Activated T-helper 1 cell treated with anti-CD3 and anti-CD28 coated beads, Interleukin-12 subunit alpha, Interleukin-12 subunit beta, Interleukin-2, Interleukin-4 antibody, amounts not matched to agents 30 ng/mL and 10 ng/mL and 1 ng/mL, durations not matched to agents 14 hours and 24 hours and 36 hours (primary cell): ENCODE measurements at regions of chr6 and their contacts with region 1.

Region 1: DNA sequence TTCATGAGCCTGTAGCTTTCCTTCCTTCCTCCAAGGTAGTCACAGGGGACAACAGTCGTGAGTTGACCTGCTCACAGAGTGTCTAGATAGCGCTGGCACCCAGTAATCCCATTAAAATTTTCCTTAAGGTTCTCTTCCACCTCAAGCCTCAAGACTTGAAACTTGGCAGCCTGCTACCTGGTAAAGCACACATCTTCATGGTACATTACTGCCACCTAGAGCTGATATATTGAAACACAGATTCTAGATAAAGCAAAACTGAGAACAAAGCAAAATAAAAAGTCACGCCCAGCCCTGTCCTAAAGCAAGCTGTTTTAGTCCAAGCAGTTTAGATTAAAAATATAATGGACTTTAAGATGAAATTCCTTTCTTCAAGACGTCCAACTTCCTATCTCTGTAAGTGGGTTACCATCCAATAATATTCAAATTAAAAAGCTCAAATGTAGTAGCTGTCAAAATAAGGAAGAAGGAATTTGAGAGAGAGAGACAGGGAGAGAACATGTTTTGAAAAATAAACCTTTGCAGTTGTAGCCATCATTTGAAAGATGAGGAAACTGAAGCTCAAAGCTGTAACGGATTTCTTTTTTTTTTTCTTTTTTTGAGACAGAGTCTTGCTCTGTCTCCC is 50.7 kb upstream of the CD83 start:
- DNase-seq: no peak
- H3K4me3 Mint-ChIP-seq: peak overlapping the region; percentile 32
- H3K27ac Mint-ChIP-seq: peak overlapping the region; percentile 21
- H3K4me1 Mint-ChIP-seq: peaks cover 35% of the 10 kb centered on the region
- H3K27me3 Mint-ChIP-seq: peaks cover 11% of the 10 kb centered on the region

Region 2: DNA sequence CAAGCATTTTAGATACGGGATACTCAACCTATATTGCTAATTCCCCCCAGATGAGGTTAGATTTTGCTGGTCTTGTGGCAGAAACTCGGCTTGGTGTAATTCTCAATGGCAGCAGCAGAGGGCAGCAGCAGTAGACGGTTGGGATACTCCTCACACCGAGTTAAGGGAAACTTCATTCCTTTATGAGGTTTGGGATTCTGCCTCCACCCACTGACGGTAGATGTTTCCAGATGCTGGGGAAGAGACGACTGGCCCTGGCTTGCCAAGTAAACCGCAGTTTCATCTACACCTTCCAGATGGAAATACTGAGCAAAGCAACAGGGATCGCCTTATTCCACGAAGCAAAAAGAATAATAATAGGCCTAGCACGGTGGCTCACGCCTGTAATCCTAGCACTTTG is 730.3 kb before region 1 on chr6:
- intact Hi-C with region 1: loop called (anchors 2 kb)
- DNase-seq: peak; percentile 60
- H3K4me3 Mint-ChIP-seq: no peak overlapping the region
- H3K27ac Mint-ChIP-seq: no peak overlapping the region
- H3K4me1 Mint-ChIP-seq: peaks cover 43% of the 10 kb centered on the region
- H3K27me3 Mint-ChIP-seq: peaks cover 9% of the 10 kb centered on the region

Region 3: GRCh38 chr6:13795041-13795750 is 271.7 kb before region 1 on chr6:
- intact Hi-C with region 1: loop called (anchors 1 kb)
- DNase-seq: peak; percentile 75
- H3K4me3 Mint-ChIP-seq: peak overlapping the region; percentile 5
- H3K27ac Mint-ChIP-seq: peak overlapping the region; percentile 40
- H3K4me1 Mint-ChIP-seq: peaks cover 21% of the 10 kb centered on the region
- H3K27me3 Mint-ChIP-seq: no peaks in the 10 kb centered on the region

Region 4: DNA sequence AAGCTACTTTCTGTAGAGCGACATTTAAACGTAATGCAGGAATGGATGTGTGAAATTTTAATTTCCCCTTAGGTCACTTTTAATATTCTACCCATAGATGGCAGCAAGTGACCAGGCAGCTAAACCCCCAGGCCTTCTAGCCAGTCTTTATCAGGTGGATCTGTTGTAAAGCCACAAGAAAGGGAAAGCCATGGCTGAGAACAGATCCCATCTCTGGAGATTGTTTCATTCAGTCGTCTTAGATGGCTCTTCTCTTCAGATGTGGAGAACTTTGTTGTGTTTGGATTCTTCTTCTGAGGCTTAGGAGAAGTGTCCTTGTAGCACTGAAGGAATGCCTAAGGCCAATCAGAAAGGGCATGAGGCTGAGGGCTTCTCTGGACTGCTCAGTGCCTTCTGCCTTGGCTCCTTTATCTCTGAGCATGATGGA is 157.9 kb before region 1 on chr6:
- intact Hi-C with region 1: loop called (anchors 1 kb)
- DNase-seq: peak; percentile 10
- H3K4me3 Mint-ChIP-seq: no peak overlapping the region
- H3K27ac Mint-ChIP-seq: no peak overlapping the region
- H3K4me1 Mint-ChIP-seq: no peaks in the 10 kb centered on the region
- H3K27me3 Mint-ChIP-seq: peaks cover 35% of the 10 kb centered on the region

Region 5: DNA sequence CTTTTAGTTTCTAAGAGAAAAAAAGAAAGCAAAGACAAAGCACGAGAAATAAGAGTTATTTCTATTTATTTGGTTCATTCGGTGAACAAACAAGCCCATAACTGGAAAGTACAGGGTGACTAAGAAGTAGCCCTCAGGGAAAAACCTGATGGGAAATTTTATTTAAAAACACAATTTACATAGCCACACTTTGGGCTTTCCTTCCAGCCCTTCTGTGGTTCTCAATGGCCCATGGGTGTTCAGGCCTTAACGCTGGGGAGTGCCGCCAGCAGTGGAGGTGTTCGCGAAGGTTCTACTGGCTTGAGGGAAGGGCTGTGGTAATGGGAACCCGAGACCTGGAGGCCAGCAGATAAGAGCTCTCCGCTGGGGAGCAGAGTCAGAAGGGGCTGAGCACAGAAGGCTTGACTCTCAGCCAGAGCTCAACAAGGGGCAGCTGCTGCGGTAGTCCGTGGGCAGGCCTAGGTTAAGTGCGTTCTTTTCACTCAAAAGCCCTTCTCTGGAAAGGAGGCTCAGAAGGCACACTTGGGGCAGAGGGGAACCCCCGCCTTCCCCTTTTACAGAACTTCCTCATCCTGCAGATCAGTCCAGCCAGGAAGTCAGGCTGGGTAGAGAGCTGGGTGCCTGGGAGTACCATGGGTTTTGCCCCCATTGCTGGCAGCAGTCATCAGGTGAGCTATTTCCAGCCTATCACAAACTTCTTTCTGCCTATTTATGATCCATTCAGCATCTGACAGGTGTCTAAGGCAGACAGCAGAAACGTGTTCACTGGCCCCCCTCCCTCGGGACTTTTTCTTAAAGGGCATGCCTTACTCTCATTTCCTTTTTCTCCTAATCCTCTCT is 41.9 kb after region 1 on chr6:
- intact Hi-C with region 1: loop called (anchors 1 kb)
- DNase-seq: no peak
- H3K4me3 Mint-ChIP-seq: peak overlapping the region; percentile 66
- H3K27ac Mint-ChIP-seq: peak overlapping the region; percentile 88
- H3K4me1 Mint-ChIP-seq: peaks cover 35% of the 10 kb centered on the region
- H3K27me3 Mint-ChIP-seq: peaks cover 15% of the 10 kb centered on the region

Region 6: GRCh38 chr6:14192216-14192788 is 125.4 kb after region 1 on chr6:
- intact Hi-C with region 1: no loop called
- DNase-seq: no peak
- H3K4me3 Mint-ChIP-seq: no peak overlapping the region
- H3K27ac Mint-ChIP-seq: no peak overlapping the region
- H3K4me1 Mint-ChIP-seq: no peaks in the 10 kb centered on the region
- H3K27me3 Mint-ChIP-seq: peaks cover 18% of the 10 kb centered on the region

Region 7: DNA sequence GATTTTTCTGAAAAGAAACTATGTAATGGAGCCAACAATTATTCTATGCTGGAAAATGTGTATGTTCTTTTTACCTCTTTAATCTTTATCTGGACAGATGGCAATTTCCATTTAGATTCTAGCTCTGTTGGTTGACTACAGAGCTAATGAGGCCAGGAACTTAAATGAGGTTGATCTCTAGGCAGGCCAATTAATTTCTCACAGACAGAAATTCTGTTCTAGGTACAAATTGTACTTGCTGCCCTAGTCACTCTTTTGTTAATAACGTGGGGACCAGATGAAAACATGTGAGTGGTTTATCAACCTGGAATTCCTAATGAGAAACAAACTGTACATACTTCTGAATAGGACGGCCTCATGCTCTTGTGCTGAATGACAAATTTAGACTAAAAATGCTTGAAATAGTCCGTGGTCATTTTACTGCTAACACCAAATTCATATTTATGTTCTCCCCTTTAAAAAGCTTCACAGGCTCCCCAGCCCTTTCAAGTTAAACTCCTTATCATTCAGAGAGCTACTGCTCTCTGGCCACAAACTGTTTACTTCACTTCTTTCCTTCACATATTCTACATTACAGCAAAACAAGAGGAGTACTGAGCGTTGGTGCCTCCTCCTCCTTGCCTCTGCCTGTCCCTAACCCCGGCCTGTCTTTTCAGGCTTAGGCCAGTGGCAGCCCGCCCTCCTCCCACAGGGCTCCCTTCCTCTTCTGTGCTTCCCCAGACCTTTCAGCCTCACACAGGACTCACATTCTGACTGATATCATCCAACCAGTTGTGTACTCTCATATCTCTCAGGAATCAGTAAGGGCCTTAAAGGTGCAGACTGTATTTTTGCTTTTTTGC is 1554.5 kb after region 1 on chr6:
- intact Hi-C with region 1: loop called (anchors 10 kb)
- DNase-seq: no peak
- H3K4me3 Mint-ChIP-seq: no peak overlapping the region
- H3K27ac Mint-ChIP-seq: peak overlapping the region; percentile 16
- H3K4me1 Mint-ChIP-seq: peaks cover 27% of the 10 kb centered on the region
- H3K27me3 Mint-ChIP-seq: peaks cover 2% of the 10 kb centered on the region